A549 (cell line): ENCODE measurements at regions of chr16 and their contacts with region 1.

Region 1: DNA sequence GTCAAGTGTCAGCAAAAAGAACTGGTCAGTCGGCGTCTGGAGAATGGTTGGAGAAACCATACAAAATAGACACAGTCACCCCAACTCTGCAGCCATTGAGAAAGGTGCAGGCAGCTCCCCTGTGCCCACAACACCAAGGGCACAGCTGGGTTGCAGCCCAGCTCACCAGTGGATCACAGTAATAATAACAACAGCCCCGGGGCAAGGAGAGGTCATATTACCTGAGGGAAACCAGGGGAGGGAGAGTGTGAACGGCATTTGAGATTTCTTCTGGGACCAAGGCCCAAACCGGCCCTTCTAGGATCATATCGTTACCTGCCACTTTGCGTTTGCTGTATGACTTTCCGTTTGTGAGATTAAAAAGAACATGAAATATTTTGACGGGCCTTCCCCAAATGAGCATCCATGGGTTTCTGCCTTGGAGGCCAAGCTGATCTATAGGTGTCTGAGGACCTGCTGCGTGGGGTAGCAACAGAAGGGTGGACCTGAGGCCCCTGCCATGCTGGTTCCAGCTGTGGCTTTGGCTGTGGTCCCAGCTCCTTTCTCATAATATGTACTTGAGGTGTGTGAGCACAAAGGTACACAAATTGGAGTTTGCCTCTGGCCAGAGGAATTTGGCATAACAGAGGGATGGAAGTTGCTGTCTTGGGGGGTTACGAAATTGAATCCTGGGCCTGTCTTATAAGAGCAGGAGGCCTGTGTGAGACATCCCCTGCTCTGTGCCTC is 154.6 kb downstream of the CMIP start:
- DNase-seq: no peak
- ATAC-seq: no peak
- H3K4me3 ChIP-seq: no peak overlapping the region
- H3K27ac ChIP-seq: peak overlapping the region; percentile 45 to 70; a peak in 4 of 6 replicates
- H3K4me1 ChIP-seq: peaks cover 67% of the 10 kb centered on the region
- CTCF ChIP-seq: no peak
- EP300 ChIP-seq: no peak
- POLR2A ChIP-seq: no peak
- RAD21 ChIP-seq: no peak

Region 2: GRCh38 chr16:81567987-81568748 is 31.0 kb before region 1 on chr16:
- CTCF ChIA-PET with region 1: no interaction called
- POLR2A ChIA-PET with region 1: no interaction called
- DNase-seq: peak; percentile 60 to 87
- ATAC-seq: peak; percentile 73 to 75
- H3K4me3 ChIP-seq: no peak overlapping the region
- H3K27ac ChIP-seq: peak overlapping the region; percentile 78 to 86
- H3K4me1 ChIP-seq: peaks cover 93% of the 10 kb centered on the region
- CTCF ChIP-seq: no peak
- EP300 ChIP-seq: no peak; a peak in 1 of 5 replicates
- POLR2A ChIP-seq: no peak
- RAD21 ChIP-seq: peak in 1 of 2 experiments; percentile 21; a peak in 2 of 5 replicates

Region 3: DNA sequence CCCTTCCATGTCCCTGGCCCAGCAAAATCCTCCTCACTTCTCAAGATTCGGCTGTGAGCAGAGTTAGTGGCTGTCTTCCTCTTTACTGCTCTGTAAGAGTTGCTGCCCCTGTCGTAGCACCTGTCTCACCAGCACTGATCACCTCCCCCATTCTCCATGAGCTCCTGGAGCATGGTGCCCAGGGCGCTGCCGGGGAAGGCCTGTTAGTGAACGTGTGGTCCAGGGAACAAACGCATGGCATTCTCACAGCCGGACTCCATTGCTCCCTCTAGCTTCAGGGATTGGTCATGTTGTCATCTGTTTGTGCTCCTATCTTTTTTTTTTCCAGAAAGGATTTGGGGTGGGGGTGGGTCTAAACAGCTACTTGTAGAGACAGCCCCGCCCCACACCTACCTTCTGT is 13.4 kb before region 1 on chr16:
- CTCF ChIA-PET with region 1: interaction called, 13 read pairs
- POLR2A ChIA-PET with region 1: no interaction called
- DNase-seq: peak in 1 of 2 experiments; percentile 76
- ATAC-seq: peak; percentile 28 to 33; a peak in 3 of 6 replicates
- H3K4me3 ChIP-seq: no peak overlapping the region
- H3K27ac ChIP-seq: peak overlapping the region; percentile 91 to 92
- H3K4me1 ChIP-seq: peaks cover 74% of the 10 kb centered on the region
- CTCF ChIP-seq: peak; percentile 32
- EP300 ChIP-seq: no peak
- POLR2A ChIP-seq: no peak
- RAD21 ChIP-seq: peak in 1 of 2 experiments; percentile 44; a peak in 3 of 5 replicates

Region 4: GRCh38 chr16:81668243-81669097 is 69.3 kb after region 1 on chr16:
- CTCF ChIA-PET with region 1: no interaction called
- POLR2A ChIA-PET with region 1: no interaction called
- DNase-seq: no peak
- ATAC-seq: peak; percentile 28 to 39
- H3K4me3 ChIP-seq: no peak overlapping the region
- H3K27ac ChIP-seq: peak overlapping the region in 1 of 2 experiments; percentile 43; a peak in 1 of 6 replicates
- H3K4me1 ChIP-seq: no peaks in the 10 kb centered on the region
- CTCF ChIP-seq: no peak
- EP300 ChIP-seq: no peak
- POLR2A ChIP-seq: no peak
- RAD21 ChIP-seq: no peak

Region 5: DNA sequence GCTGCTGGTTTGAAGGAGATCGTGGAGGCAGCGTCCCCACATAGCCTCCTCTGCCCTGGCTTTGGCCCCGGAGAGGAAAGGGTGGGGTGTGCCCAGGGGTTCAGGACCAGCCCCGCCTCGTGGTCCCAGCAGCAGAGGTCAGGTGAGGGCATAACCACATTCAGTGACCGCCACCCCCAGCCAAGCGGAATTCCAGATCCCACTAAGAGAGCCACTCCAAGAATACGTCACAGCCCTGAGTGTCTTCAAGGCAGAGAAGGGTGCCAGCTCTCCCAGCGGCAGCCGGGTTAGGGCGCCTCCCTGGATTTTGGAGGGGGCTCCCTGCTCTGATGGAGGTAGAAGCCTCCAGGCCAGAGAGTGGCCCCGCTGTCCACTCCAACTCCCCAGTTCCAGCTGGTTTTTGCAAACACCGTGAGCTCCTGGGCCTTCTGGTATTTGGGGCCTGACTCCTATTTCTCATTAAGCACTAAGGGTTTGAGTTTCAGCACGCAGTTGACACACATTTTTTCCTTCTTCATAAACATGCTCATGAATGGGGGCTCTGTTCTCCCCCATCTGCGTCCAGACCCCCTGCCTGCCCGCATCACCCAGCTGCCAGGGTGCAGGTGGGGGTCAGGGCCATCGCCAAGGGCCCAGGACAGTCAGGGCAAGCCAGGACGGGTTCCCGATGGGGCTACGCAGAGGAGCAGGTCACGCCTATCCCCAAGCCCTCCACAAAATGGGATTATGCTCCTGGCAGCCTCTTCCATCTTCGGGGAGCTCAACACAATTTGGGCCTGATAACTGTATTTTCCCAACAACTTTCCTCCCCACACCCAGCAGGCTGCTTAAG is 81.5 kb after region 1 on chr16:
- CTCF ChIA-PET with region 1: no interaction called
- POLR2A ChIA-PET with region 1: no interaction called
- DNase-seq: no peak
- ATAC-seq: no peak; a peak in 1 of 6 replicates
- H3K4me3 ChIP-seq: no peak overlapping the region
- H3K27ac ChIP-seq: peak overlapping the region in 1 of 2 experiments; percentile 11; a peak in 3 of 6 replicates
- H3K4me1 ChIP-seq: peaks cover 4% of the 10 kb centered on the region; the same call in 1 of the 3 replicates
- CTCF ChIP-seq: no peak
- EP300 ChIP-seq: no peak
- POLR2A ChIP-seq: no peak
- RAD21 ChIP-seq: no peak

Region 6: GRCh38 chr16:81798311-81799137 is 199.3 kb after region 1 on chr16:
- CTCF ChIA-PET with region 1: no interaction called
- POLR2A ChIA-PET with region 1: no interaction called
- DNase-seq: no peak
- ATAC-seq: peak in 1 of 2 experiments; percentile 35; a peak in 1 of 6 replicates
- H3K4me3 ChIP-seq: no peak overlapping the region
- H3K27ac ChIP-seq: no peak overlapping the region
- H3K4me1 ChIP-seq: no peaks in the 10 kb centered on the region
- CTCF ChIP-seq: no peak
- EP300 ChIP-seq: no peak
- POLR2A ChIP-seq: no peak
- RAD21 ChIP-seq: no peak